ENCODE measurements at regions of chr20 and their contacts with region 1.

Region 1: GRCh38 chr20:61886721-61887594 is 178.7 kb downstream of the TAF4 start:
- DNase-seq: peak; percentile 35
- ATAC-seq: peak; percentile 86
- H3K4me3 ChIP-seq: no peak overlapping the region
- H3K27ac ChIP-seq: no peak overlapping the region
- H3K4me1 ChIP-seq: no peaks in the 10 kb centered on the region
- H3K27me3 ChIP-seq: peaks cover 4% of the 10 kb centered on the region; the same call in 1 of the 2 replicates
- CTCF ChIP-seq: peak; percentile 71
- POLR2A ChIP-seq: no peak
- RAD21 ChIP-seq: peak; percentile 72

Region 2: DNA sequence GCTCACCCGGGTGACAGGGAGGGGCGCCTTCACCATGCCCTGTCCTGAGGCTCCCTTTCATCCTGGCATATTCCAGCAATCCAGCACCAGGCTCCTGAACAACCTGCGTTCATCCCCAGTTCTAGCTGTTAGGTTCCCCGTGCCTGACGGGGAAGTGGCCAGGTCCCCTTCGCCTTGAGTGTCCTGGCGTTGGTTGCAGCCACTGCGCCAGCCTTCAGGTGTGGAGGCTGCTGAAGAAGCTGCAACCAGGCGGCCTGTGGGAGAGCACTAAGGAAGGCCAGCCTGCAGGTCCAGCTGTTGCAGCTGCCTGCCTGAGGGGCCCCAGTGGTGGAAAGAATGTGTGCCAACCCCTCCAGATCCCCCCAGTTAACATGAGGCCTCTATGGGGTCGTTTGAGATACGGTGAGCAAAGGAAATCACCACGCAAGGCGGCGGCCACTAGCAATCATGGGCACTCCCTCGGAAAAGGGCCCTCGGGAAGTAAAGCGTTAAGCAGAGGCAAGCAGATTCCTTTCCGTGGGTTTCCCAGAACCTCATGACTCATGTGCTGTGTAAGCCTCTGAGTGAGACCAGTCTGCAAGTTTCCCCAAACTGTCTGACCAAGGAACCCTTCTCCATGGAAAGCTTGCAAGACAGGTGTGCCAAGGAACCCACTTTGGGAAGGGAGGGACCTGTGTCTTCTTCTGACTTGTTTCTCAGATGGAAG is 142.1 kb before region 1 on chr20:
- CTCF ChIA-PET with region 1: no interaction called
- POLR2A ChIA-PET with region 1: no interaction called
- dilution Hi-C with region 1: no loop called
- in situ Hi-C with region 1: no loop called
- intact Hi-C with region 1: loop called (anchors 5 kb)
- DNase-seq: peak; percentile 73
- ATAC-seq: peak; percentile 64
- H3K4me3 ChIP-seq: no peak overlapping the region
- H3K27ac ChIP-seq: no peak overlapping the region
- H3K4me1 ChIP-seq: no peaks in the 10 kb centered on the region; the same call in 1 of the 2 replicates
- H3K27me3 ChIP-seq: no peaks in the 10 kb centered on the region; the same call in 1 of the 2 replicates
- CTCF ChIP-seq: no peak
- POLR2A ChIP-seq: no peak
- RAD21 ChIP-seq: no peak